ENCODE measurements at regions of chr11 and their contacts with region 1.

Region 1: GRCh38 chr11:123062158-123062891 is 389 bp upstream of the HSPA8 start:
- DNase-seq: peak; percentile 100
- ATAC-seq: peak; percentile 89
- H3K4me3 Mint-ChIP-seq: peak overlapping the region; percentile 99
- H3K27ac Mint-ChIP-seq: peak overlapping the region; percentile 99
- H3K4me1 Mint-ChIP-seq: peaks cover 37% of the 10 kb centered on the region
- H3K27me3 Mint-ChIP-seq: no peaks in the 10 kb centered on the region

Region 2: GRCh38 chr11:122690801-122691548 is 371.4 kb before region 1 on chr11:
- CTCF ChIA-PET with region 1: interaction called, 3 read pairs
- POLR2A ChIA-PET with region 1: interaction called, 3 read pairs
- intact Hi-C with region 1: loop called in 1 of 2 experiments (anchors 1 kb)
- DNase-seq: peak; percentile 35
- ATAC-seq: peak; percentile 16
- H3K4me3 Mint-ChIP-seq: peak overlapping the region; percentile 46
- H3K27ac Mint-ChIP-seq: peak overlapping the region; percentile 80
- H3K4me1 Mint-ChIP-seq: peaks cover 79% of the 10 kb centered on the region
- H3K27me3 Mint-ChIP-seq: no peaks in the 10 kb centered on the region

Region 3: GRCh38 chr11:123103326-123103980 is 41.1 kb after region 1 on chr11:
- CTCF ChIA-PET with region 1: interaction called, 13 read pairs
- POLR2A ChIA-PET with region 1: interaction called, 12 read pairs
- intact Hi-C with region 1: loop called in 1 of 2 experiments (anchors 5 kb)
- DNase-seq: peak; percentile 46
- ATAC-seq: peak; percentile 77
- H3K4me3 Mint-ChIP-seq: no peak overlapping the region
- H3K27ac Mint-ChIP-seq: no peak overlapping the region
- H3K4me1 Mint-ChIP-seq: peaks cover 24% of the 10 kb centered on the region
- H3K27me3 Mint-ChIP-seq: no peaks in the 10 kb centered on the region

Region 4: GRCh38 chr11:123381817-123382554 is 319.7 kb after region 1 on chr11:
- CTCF ChIA-PET with region 1: interaction called, 5 read pairs
- POLR2A ChIA-PET with region 1: interaction called, 5 read pairs
- intact Hi-C with region 1: loop called (anchors 1 to 2 kb)
- DNase-seq: peak; percentile 81
- ATAC-seq: peak; percentile 91
- H3K4me3 Mint-ChIP-seq: no peak overlapping the region
- H3K27ac Mint-ChIP-seq: peak overlapping the region; percentile 78
- H3K4me1 Mint-ChIP-seq: peaks cover 29% of the 10 kb centered on the region
- H3K27me3 Mint-ChIP-seq: peaks cover 4% of the 10 kb centered on the region

Region 5: DNA sequence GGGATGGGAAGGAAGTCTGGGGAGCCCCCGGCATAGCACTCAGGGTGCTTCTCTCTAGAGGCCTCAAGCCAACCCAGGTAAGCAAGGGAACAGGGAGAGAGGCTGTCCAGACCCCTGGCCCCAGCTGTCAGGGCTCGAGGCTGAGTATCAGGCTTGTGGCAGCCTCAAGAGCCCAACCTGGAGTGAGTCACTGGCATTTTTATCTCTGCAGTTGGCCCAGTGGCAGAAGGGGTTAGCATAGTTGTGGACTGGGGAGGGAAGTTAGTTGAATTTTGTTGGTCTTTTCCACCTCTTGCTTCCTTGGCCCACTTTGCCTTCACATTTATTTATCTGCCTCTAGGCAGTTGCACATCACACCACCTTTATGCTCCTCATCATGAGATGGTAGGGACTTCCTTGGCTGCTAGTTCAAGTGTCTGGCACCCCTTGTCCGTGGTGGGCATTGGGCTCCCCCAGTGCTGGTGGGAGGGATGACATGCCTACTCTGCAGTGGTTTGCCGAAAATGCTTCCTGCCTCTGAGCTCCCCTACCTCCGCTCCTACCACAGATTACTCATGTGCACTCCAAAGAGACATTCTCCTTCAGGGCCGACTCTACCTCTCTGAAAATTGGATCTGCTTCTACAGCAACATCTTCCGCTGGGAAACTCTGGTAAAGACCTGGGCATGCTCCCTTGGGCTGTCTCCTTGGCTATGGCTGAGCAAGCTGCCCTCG is 532.0 kb after region 1 on chr11:
- CTCF ChIA-PET with region 1: no interaction called
- POLR2A ChIA-PET with region 1: no interaction called
- intact Hi-C with region 1: no loop called
- DNase-seq: no peak
- ATAC-seq: no peak
- H3K4me3 Mint-ChIP-seq: no peak overlapping the region
- H3K27ac Mint-ChIP-seq: no peak overlapping the region
- H3K4me1 Mint-ChIP-seq: no peaks in the 10 kb centered on the region
- H3K27me3 Mint-ChIP-seq: no peaks in the 10 kb centered on the region

Region 6: GRCh38 chr11:123741159-123742028 is 679.1 kb after region 1 on chr11 and contains the start of gene ZNF202:
- CTCF ChIA-PET with region 1: no interaction called
- POLR2A ChIA-PET with region 1: no interaction called
- intact Hi-C with region 1: loop called in 1 of 2 experiments (anchors 1 kb)
- DNase-seq: peak; percentile 96
- ATAC-seq: peak; percentile 96
- H3K4me3 Mint-ChIP-seq: peak within 1 kb of the TSS; percentile 81
- H3K27ac Mint-ChIP-seq: peak within 1 kb of the TSS; percentile 97
- H3K4me1 Mint-ChIP-seq: peaks cover 31% of the 10 kb centered on the region
- H3K27me3 Mint-ChIP-seq: peaks cover 2% of the 10 kb centered on the region
- total RNA-seq, gene ZNF202: 9.5 to 12.1 TPM